ENCODE measurements at regions of chr13 and their contacts with region 1.

Region 1: DNA sequence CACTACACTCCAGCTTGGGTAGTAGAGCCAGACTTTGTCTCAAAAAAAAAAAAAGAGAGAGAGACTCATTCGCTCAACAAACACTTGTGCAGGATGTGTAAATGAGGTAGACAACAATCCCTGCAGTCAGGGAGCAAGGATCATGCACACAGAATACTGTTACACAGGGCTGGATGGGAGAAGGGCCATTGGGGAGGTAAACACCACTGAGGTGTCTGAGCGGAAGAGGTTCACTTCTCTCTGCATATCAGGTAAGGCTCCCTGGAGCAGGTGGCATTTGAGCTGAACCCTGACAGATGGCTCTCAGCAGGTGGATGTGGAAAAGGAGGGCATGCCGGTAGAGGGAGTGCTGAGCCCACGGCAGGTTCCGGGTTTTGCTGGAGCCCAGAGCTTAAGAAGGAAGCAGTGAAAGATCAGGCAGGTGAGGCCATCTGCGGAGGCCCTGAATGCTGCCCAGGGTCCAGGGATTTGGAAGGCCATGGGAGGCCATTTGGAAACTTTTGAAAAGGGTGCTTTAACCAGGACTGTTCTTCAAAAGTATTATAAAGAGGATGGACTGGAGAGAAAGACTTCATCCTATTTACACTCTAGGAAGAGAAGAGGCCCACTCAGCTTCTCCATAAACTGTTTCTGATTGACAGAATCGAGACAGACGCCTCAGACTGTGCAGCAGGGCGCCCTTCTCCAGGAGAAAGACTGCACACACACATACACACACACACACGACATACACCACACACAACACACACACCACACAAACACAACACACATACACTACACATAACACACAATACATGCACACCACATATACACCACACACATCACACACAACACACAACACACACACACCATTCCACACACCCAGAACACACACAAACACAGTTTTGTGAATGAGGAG is 199.4 kb downstream of the USP12 start:
- DNase-seq: peak in 1 of 5 donors; percentile 34
- ATAC-seq: peak in 1 of 4 donors; percentile 27
- H3K4me3 ChIP-seq: no peak overlapping the region
- H3K27ac ChIP-seq: no peak overlapping the region
- H3K4me1 ChIP-seq: peaks cover 0 to 10% (median under 1%) of the 10 kb centered on the region in 12 donors
- H3K27me3 ChIP-seq: no peaks in the 10 kb centered on the region
- CTCF ChIP-seq: peak in 6 of 12 donors; percentile 15 to 36 (median 25)
- POLR2A ChIP-seq: no peak

Region 2: DNA sequence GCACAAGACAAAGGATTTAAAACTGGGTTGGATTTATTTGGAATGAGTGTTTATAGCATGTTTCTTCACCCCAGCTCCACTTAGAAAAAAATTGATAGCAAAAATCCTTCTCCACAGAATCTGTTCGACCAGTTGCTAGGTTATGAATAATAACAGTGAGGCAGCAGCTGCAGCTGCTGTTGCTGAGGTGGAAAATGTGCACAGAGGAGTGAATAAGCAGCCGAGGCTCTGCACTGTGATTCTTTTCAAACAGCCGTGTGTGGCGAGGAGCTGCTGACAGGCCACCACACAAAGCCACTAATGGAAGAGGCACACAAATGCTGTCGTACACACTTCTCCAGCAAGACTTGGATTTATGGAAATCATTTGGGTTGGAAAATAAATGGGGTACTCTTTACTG is 291.9 kb after region 1 on chr13:
- intact Hi-C with region 1: loop called in 1 of 10 experiments (anchors 10 kb)
- DNase-seq: peak in 1 of 5 donors; percentile 47
- ATAC-seq: peak; percentile 67 to 81 (median 76)
- H3K4me3 ChIP-seq: no peak overlapping the region
- H3K27ac ChIP-seq: peak overlapping the region in 8 of 12 donors; percentile 36 to 63 (median 43)
- H3K4me1 ChIP-seq: peaks cover 0 to 46% (median 16%) of the 10 kb centered on the region in 12 donors
- H3K27me3 ChIP-seq: no peaks in the 10 kb centered on the region
- CTCF ChIP-seq: no peak
- POLR2A ChIP-seq: no peak